ENCODE measurements at regions of chr12 and their contacts with region 1.

Region 1: GRCh38 chr12:42325653-42326474 is at the starts of genes PPHLN1 and ZCRB1:
- DNase-seq: peak; percentile 90
- ATAC-seq: peak; percentile 99
- total RNA-seq, gene PPHLN1: 23.3 TPM
- total RNA-seq, gene ZCRB1: 59.0 TPM

Region 2: DNA sequence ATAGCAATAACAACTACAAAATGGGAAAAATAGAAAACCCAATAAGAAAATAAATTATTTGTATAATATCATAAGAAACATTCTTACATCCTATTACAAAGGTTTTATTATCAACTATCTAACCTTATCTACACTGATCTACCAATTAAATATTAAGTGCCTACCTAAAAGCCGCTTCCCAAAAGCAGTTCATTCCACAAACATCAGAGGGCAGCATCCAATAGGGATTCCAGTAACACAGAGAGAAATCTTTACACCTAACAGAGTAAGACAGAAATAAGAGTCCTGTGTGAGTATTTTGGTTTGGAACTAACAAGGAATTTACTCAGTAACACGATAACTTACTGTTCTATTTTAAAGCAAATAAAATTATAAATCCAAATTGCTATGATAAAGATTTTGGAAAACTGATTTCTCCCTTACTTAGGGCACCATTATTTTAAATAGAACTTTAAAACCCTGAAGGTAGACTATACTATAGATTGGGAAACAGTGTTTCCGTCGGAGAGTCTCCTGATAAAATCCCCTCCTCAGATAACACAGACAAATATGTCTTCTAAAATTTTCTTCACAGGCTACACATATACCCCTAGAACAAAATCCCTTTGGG is 196.2 kb before region 1 on chr12:
- intact Hi-C with region 1: loop called (anchors 5 kb)
- DNase-seq: no peak
- ATAC-seq: peak; percentile 90

Region 3: GRCh38 chr12:42196723-42197603 is 128.9 kb before region 1 on chr12:
- intact Hi-C with region 1: no loop called
- DNase-seq: no peak
- ATAC-seq: no peak

Region 4: GRCh38 chr12:42237052-42237852 is 88.6 kb before region 1 on chr12:
- intact Hi-C with region 1: loop called (anchors 10 kb)
- DNase-seq: peak; percentile 86
- ATAC-seq: peak; percentile 65

Region 5: GRCh38 chr12:42360747-42361403 is 35.0 kb after region 1 on chr12:
- intact Hi-C with region 1: no loop called
- DNase-seq: no peak
- ATAC-seq: no peak